BJ (cell line): ENCODE measurements at regions of chr6 and their contacts with region 1.

Region 1: GRCh38 chr6:150079604-150080003 is 10.7 kb upstream of the ULBP3 start:
- DNase-seq: no peak
- H3K4me3 ChIP-seq: no peak overlapping the region
- H3K27me3 ChIP-seq: peaks cover 7% of the 10 kb centered on the region
- CTCF ChIP-seq: no peak

Region 2: DNA sequence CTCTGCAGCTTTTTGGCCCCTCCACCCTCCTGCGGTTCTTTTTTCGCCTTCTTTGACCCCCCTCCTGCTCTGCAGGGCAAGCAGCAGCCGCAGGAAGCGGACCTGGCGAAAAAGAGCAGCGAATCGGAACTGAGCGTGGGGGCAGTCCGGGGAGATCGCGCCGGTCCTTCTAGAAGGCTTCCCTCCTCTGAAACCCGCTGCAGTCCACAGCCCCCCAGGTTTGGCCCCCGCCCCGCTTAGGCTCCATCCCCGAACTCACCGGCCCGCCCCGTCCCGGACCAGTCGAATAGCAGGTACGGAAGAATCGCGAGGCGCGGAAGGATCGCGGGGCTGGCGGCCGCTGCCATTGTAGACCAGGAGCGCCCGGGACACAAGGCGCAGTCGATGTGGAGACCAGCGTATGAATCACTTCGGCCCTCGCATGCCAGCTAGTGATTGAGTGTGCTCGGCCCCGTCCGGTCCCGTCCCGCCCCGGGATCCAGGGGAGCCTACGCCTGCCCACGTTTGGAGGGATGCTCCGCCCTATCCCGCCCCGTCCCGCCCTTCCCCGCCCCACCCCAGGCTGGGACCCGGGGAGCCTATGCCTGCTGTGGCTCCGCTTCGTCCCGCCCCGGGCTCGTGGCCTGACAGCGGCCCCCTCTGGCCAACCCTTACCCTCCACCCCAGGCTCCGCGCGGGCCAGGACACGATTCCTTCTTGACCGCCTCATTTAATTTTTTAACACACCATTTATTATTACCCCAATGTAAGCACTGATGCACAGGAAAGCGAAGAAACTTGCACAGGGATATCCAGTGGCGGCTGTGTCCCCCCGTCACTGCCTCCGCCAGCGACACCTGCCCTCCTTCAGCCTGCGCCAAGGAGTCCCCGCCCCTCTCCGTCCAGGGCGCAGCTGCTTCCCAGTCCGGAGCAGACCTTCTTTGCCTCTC is 10.6 kb before region 1 on chr6 and contains the start of gene ULBP3:
- CTCF ChIA-PET with region 1: interaction called, 17 read pairs
- POLR2A ChIA-PET with region 1: no interaction called
- DNase-seq: peak; percentile 71
- H3K4me3 ChIP-seq: peak within 1 kb of the TSS; percentile 55
- H3K27me3 ChIP-seq: no peaks in the 10 kb centered on the region
- CTCF ChIP-seq: peak; percentile 78
- polyA plus RNA-seq, gene ULBP3: 5.6 and 6.0 TPM in 2 replicates

Region 3: GRCh38 chr6:150091476-150091875 is 11.9 kb after region 1 on chr6:
- CTCF ChIA-PET with region 1: interaction called, 55 read pairs
- POLR2A ChIA-PET with region 1: no interaction called
- DNase-seq: no peak
- H3K4me3 ChIP-seq: no peak overlapping the region
- H3K27me3 ChIP-seq: peaks cover 8% of the 10 kb centered on the region
- CTCF ChIP-seq: no peak

Region 4: GRCh38 chr6:150320442-150320841 is 240.8 kb after region 1 on chr6:
- CTCF ChIA-PET with region 1: interaction called, 12 read pairs
- POLR2A ChIA-PET with region 1: no interaction called
- DNase-seq: no peak
- H3K4me3 ChIP-seq: no peak overlapping the region
- H3K27me3 ChIP-seq: peaks cover 3% of the 10 kb centered on the region; the same call in 1 of the 2 replicates
- CTCF ChIP-seq: no peak

Region 5: GRCh38 chr6:150334790-150335783 is 255.5 kb after region 1 on chr6:
- CTCF ChIA-PET with region 1: interaction called, 30 read pairs
- POLR2A ChIA-PET with region 1: no interaction called
- DNase-seq: no peak
- H3K4me3 ChIP-seq: no peak overlapping the region
- H3K27me3 ChIP-seq: no peaks in the 10 kb centered on the region; the same call in 1 of the 2 replicates
- CTCF ChIP-seq: peak; percentile 83

Region 6: GRCh38 chr6:150343434-150343833 is 263.8 kb after region 1 on chr6:
- CTCF ChIA-PET with region 1: interaction called, 24 read pairs
- POLR2A ChIA-PET with region 1: no interaction called
- DNase-seq: no peak
- H3K4me3 ChIP-seq: no peak overlapping the region
- H3K27me3 ChIP-seq: no peaks in the 10 kb centered on the region; the same call in 1 of the 2 replicates
- CTCF ChIP-seq: no peak

Region 7: GRCh38 chr6:150547502-150548222 is 468.1 kb after region 1 on chr6:
- CTCF ChIA-PET with region 1: no interaction called
- POLR2A ChIA-PET with region 1: no interaction called
- DNase-seq: no peak
- H3K4me3 ChIP-seq: no peak overlapping the region
- H3K27me3 ChIP-seq: peaks cover 2% of the 10 kb centered on the region; the same call in 1 of the 2 replicates
- CTCF ChIP-seq: no peak